MCF 10A (cell line): ENCODE measurements at regions of chr9 and their contacts with region 1.

Region 1: DNA sequence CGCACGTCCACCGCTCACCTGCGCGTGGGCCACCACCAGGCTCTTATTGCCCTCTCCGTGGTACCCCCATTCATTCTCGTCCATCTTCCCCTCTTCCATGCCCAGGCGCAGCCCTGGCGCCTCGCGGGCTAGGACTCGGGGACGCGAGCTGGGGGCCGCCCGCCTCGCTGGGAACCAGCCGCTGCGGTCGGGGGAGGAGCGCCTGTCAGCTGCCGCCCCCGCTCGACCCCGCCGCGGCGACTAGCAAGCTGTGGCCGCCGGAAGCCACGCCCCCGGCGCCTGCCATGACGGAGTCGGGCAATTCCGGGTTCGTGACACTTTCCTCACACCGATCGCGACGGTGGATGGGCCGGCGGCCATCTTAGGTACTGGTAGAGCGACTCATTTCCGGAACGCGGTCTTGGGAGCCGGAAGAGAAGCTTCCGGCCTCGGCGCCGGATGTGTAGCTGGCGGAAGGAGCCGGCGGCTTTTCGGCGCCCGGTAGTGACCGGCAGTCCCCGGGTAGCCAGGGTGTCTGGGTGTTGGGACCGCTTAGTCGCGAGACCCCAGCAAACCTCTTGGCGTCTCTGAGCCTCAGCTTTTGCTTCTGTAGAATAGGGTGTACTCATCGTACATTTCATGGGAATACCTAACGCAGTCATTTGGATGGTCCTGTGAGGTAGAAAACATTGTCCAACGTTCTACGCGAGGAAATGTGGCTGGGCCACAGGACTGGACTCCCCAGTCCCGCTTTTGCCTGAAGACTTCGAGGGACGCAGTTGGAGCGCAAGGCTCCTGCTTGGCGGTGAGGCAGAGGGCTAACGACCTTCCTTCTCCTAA is at the start of gene IPPK:
- DNase-seq: peak; percentile 99
- H3K4me3 Mint-ChIP-seq: peak within 1 kb of the TSS; percentile 74
- H3K27ac Mint-ChIP-seq: peak within 1 kb of the TSS; percentile 69
- H3K4me1 Mint-ChIP-seq: peaks cover 10% of the 10 kb centered on the region
- H3K27me3 Mint-ChIP-seq: no peaks in the 10 kb centered on the region
- CTCF ChIP-seq: no peak
- total RNA-seq, gene IPPK: 16.3 and 16.6 TPM in 2 replicates

Region 2: DNA sequence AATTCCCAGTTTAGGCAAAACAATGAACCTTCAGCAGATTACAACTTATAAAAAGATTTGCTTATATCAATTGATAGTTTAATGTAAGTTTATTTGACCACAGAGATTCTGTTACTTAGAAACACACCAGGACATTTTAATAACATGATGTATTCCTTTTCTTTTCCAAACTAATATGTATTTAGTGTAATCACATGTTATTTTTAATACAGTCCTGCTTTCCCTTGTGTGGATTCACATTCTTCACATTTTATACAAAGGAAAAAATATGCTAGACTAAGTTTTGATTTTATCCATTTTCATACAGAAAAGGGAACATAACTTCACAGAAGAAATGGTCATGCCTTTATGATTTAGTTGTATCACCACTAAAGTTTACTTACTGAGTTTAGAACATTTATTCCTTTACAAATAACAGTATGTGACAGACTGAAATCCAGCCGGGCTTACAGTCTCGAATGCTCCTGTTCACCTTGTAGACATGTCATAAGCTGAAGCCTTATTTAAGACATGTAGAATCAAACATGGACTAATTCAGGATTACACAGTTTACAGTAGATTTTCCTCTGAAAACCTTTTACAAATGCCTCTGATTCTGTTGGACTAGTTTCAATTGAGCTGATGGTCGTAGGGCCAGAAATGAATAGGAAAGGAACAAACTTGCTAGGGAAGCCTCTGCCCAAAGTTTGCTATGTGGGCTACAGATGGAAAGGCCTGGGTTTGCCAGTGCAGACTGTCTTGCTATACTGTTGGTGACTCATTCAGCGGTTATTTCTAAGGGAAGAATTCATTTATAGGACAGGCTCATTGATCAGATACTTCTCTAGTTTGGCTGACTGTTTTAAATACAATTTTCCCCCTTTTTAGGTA is 181.2 kb before region 1 on chr9:
- CTCF ChIA-PET with region 1: no interaction called
- POLR2A ChIA-PET with region 1: no interaction called
- intact Hi-C with region 1: no loop called
- DNase-seq: no peak
- H3K4me3 Mint-ChIP-seq: no peak overlapping the region
- H3K27ac Mint-ChIP-seq: no peak overlapping the region
- H3K4me1 Mint-ChIP-seq: peaks cover 15% of the 10 kb centered on the region
- H3K27me3 Mint-ChIP-seq: no peaks in the 10 kb centered on the region
- CTCF ChIP-seq: no peak

Region 3: GRCh38 chr9:92650839-92651621 is 19.1 kb before region 1 on chr9:
- CTCF ChIA-PET with region 1: interaction called, 3 read pairs
- POLR2A ChIA-PET with region 1: interaction called, 68 read pairs
- intact Hi-C with region 1: no loop called
- DNase-seq: no peak
- H3K4me3 Mint-ChIP-seq: no peak overlapping the region
- H3K27ac Mint-ChIP-seq: peak overlapping the region; percentile 78
- H3K4me1 Mint-ChIP-seq: peaks cover 28% of the 10 kb centered on the region
- H3K27me3 Mint-ChIP-seq: no peaks in the 10 kb centered on the region
- CTCF ChIP-seq: no peak

Region 4: GRCh38 chr9:92680166-92681119 is 10.3 kb after region 1 on chr9:
- CTCF ChIA-PET with region 1: interaction called, 5 read pairs
- POLR2A ChIA-PET with region 1: interaction called, 20 read pairs
- intact Hi-C with region 1: no loop called
- DNase-seq: peak; percentile 92
- H3K4me3 Mint-ChIP-seq: peak overlapping the region; percentile 3
- H3K27ac Mint-ChIP-seq: peak overlapping the region; percentile 59
- H3K4me1 Mint-ChIP-seq: peaks cover 8% of the 10 kb centered on the region
- H3K27me3 Mint-ChIP-seq: no peaks in the 10 kb centered on the region
- CTCF ChIP-seq: no peak

Region 5: DNA sequence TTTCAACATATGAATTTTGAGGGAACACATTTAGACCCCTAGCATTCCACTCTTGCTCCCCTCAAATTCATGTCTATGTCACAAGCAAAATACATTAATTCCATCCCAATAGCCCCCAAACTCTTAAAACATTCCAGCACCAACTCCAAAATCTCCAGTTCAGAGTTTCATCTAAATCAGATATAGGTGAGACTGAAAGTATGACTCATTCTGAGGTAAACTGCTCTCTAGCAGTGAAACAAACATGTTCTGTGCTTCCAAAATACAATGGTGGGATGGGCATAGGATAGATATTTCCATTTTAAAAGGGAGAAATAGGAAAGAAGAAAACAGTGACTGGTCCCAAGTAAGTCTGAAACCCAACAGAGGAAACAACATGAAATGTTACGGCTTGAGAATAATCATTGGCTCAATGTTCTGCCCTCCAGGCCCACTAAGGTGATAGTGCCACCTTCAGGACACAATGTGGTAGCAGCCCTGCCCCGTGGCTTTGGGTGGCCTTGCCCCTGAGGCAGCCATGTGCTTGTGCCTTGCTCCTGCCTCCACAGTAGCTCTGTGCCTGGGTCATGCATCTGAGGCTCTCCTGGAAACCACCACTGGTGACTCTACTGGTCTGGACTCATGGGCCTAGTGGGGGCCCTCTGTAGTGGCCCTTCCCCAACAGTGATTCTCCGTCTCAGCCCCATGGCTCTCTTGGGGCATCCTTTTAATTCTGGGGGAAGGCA is 36.3 kb after region 1 on chr9:
- CTCF ChIA-PET with region 1: interaction called, 4 read pairs
- POLR2A ChIA-PET with region 1: interaction called, 17 read pairs
- intact Hi-C with region 1: no loop called
- DNase-seq: peak; percentile 74
- H3K4me3 Mint-ChIP-seq: no peak overlapping the region
- H3K27ac Mint-ChIP-seq: peak overlapping the region; percentile 74
- H3K4me1 Mint-ChIP-seq: peaks cover 25% of the 10 kb centered on the region
- H3K27me3 Mint-ChIP-seq: no peaks in the 10 kb centered on the region
- CTCF ChIP-seq: peak; percentile 57

Region 6: DNA sequence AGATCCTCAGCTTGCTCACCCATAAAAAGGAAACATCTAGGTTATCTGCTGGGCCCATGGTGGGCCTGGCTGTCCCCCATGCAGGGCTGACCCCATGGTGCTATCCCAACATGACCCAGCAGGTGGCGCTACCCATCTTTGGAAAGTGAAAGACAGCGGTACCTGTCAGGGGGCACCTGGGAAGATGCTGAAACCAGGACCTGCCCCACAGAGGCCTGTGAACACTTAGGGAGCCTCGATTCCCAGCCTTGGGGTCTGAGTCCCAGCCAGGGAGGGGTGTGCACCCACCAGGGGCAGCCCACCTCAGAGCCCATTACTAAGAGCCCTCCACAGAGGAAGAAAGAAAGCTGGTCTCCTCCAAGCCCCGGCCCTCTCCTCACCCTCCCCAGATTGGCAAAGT is 46.5 kb after region 1 on chr9:
- CTCF ChIA-PET with region 1: interaction called, 8 read pairs
- POLR2A ChIA-PET with region 1: interaction called, 33 read pairs
- intact Hi-C with region 1: loop called (anchors 2 kb)
- DNase-seq: peak; percentile 64
- H3K4me3 Mint-ChIP-seq: peak overlapping the region; percentile 11
- H3K27ac Mint-ChIP-seq: peak overlapping the region; percentile 77
- H3K4me1 Mint-ChIP-seq: peaks cover 7% of the 10 kb centered on the region
- H3K27me3 Mint-ChIP-seq: no peaks in the 10 kb centered on the region
- CTCF ChIP-seq: peak; percentile 87

Region 7: DNA sequence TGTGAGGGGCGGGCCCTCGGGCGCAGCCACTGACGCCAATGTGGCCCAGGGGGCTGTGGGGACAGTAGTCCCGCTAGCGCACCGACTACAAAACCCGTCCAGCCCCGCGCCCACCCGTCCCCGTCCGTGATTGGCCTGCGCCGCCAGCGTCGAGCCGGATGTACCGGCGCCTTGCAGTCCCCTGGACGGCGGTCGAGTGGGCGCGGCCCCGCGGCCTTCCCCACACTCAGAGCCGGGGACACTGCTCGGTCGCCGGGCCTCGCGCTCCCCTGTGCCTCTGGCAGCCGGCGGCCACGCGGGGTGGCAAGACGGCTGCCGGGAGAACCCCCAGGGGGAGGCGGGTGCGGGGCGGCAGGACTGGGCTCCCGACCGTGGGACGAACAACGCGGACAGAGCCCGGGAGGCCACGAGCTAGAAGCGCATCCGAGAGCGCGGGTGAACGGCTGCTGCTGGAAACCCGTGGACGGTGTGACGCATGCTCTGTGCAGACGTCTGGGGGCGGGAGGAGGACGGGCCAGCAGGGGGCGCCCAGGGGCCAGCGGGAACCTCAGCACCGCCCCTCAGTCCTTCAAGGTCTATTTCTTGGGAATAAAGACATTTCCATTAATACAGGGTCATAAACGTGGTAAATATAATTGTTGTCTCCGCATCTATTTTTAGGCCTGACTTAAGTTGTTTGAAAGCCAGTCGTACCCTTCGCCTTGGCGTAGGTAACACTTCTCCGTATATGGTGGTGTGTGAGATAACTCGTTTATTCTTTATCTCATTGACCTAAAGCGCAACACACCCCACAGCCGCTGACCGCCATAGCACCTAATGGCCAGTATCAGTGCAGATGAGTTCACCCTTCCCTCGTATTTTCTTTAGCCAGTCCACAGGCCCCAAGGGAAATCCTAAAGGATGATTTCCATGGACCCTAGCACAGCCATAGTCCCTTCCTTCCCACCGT is 95.2 kb after region 1 on chr9:
- CTCF ChIA-PET with region 1: interaction called, 4 read pairs
- POLR2A ChIA-PET with region 1: interaction called, 34 read pairs
- intact Hi-C with region 1: loop called (anchors 10 kb)
- DNase-seq: peak; percentile 97
- H3K4me3 Mint-ChIP-seq: peak overlapping the region; percentile 85
- H3K27ac Mint-ChIP-seq: peak overlapping the region; percentile 29
- H3K4me1 Mint-ChIP-seq: peaks cover 52% of the 10 kb centered on the region
- H3K27me3 Mint-ChIP-seq: no peaks in the 10 kb centered on the region
- CTCF ChIP-seq: peak; percentile 96